Endothelial cell of umbilical vein (primary cell): ENCODE measurements at regions of chr18 and their contacts with region 1.

Region 1: GRCh38 chr18:24488824-24489493 is 28.5 kb downstream of the HRH4 start:
- DNase-seq: peak; percentile 54
- H3K4me3 ChIP-seq: no peak overlapping the region
- H3K27ac ChIP-seq: no peak overlapping the region
- H3K4me1 ChIP-seq: no peaks in the 10 kb centered on the region
- H3K27me3 ChIP-seq: peaks cover 14 to 16% of the 10 kb centered on the region in 2 experiments
- CTCF ChIP-seq: peak; percentile 42 to 56
- POLR2A ChIP-seq: no peak

Region 2: GRCh38 chr18:24176727-24177416 is 312.1 kb before region 1 on chr18:
- CTCF ChIA-PET with region 1: interaction called, 276 read pairs
- POLR2A ChIA-PET with region 1: no interaction called
- dilution Hi-C with region 1: no loop called
- intact Hi-C with region 1: loop called (anchors 1 kb)
- DNase-seq: peak; percentile 43
- H3K4me3 ChIP-seq: no peak overlapping the region
- H3K27ac ChIP-seq: no peak overlapping the region
- H3K4me1 ChIP-seq: no peaks in the 10 kb centered on the region
- H3K27me3 ChIP-seq: no peaks in the 10 kb centered on the region
- CTCF ChIP-seq: peak; percentile 72 to 86
- POLR2A ChIP-seq: no peak

Region 3: GRCh38 chr18:24200494-24201290 is 288.3 kb before region 1 on chr18:
- CTCF ChIA-PET with region 1: no interaction called
- POLR2A ChIA-PET with region 1: no interaction called
- dilution Hi-C with region 1: no loop called
- intact Hi-C with region 1: no loop called
- DNase-seq: no peak
- H3K4me3 ChIP-seq: no peak overlapping the region
- H3K27ac ChIP-seq: no peak overlapping the region
- H3K4me1 ChIP-seq: no peaks in the 10 kb centered on the region
- H3K27me3 ChIP-seq: no peaks in the 10 kb centered on the region
- CTCF ChIP-seq: no peak
- POLR2A ChIP-seq: no peak

Region 4: GRCh38 chr18:24369426-24369825 is 119.5 kb before region 1 on chr18:
- CTCF ChIA-PET with region 1: interaction called, 355 read pairs
- POLR2A ChIA-PET with region 1: no interaction called
- dilution Hi-C with region 1: no loop called
- intact Hi-C with region 1: no loop called
- DNase-seq: no peak
- H3K4me3 ChIP-seq: no peak overlapping the region
- H3K27ac ChIP-seq: peak overlapping the region; percentile 19
- H3K4me1 ChIP-seq: peaks cover 11% of the 10 kb centered on the region
- H3K27me3 ChIP-seq: no peaks in the 10 kb centered on the region
- CTCF ChIP-seq: no peak
- POLR2A ChIP-seq: no peak

Region 5: DNA sequence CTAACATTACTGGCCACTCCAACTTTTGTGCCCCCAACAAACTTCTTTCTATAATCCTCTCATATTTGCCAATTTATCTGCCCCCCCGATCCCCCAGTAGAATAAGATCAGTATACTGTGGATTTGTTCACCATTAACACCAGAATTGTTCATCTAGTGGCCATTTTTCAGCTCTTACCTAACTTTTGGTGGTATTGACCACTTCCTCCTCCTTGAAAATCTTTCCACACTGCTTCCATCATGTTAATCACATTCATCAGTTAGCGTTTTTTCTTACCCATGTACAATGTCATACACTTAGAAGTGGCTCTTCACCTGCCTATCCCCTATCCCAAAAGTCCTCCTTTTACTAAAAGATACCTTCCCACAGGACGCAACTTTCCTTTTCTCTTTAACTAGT is 56.3 kb before region 1 on chr18:
- CTCF ChIA-PET with region 1: interaction called, 10 read pairs
- POLR2A ChIA-PET with region 1: no interaction called
- dilution Hi-C with region 1: no loop called
- intact Hi-C with region 1: no loop called
- DNase-seq: no peak
- H3K4me3 ChIP-seq: no peak overlapping the region
- H3K27ac ChIP-seq: no peak overlapping the region
- H3K4me1 ChIP-seq: peaks cover 3% of the 10 kb centered on the region
- H3K27me3 ChIP-seq: no peaks in the 10 kb centered on the region
- CTCF ChIP-seq: no peak
- POLR2A ChIP-seq: no peak

Region 6: DNA sequence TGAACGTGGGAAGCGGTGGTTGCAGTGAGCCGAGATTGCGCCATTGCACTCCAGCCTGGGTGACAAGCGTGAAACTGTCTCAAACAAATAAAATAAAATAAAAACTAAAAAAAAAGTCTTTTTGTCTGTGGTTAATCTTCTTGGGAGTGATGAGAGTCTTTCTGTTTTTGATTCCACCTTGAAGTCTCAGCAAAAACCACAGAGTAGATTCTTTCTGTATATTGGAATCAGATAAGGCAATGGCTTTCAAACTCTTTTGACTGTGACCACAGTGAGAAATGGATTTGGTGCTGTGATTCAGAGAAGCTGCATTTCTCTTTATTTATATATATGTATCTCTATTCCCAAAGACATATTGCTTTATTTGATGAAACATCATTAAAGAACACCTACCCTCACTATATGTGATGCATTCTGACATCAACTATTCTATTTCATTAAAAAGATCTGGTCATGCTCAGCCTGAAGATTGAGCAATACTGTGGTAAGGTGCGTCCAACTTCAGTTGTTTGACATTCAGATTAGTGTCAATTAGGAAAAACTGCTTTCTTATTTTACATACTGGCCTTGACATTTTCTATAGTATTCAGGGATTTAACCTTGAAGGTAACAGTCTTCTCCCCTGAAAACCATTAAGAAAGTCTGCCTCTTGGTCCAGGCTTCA is 12.9 kb before region 1 on chr18:
- CTCF ChIA-PET with region 1: interaction called, 16 read pairs
- POLR2A ChIA-PET with region 1: no interaction called
- dilution Hi-C with region 1: no loop called
- intact Hi-C with region 1: no loop called
- DNase-seq: no peak
- H3K4me3 ChIP-seq: no peak overlapping the region
- H3K27ac ChIP-seq: no peak overlapping the region
- H3K4me1 ChIP-seq: no peaks in the 10 kb centered on the region
- H3K27me3 ChIP-seq: no peaks in the 10 kb centered on the region
- CTCF ChIP-seq: no peak
- POLR2A ChIP-seq: no peak

Region 7: DNA sequence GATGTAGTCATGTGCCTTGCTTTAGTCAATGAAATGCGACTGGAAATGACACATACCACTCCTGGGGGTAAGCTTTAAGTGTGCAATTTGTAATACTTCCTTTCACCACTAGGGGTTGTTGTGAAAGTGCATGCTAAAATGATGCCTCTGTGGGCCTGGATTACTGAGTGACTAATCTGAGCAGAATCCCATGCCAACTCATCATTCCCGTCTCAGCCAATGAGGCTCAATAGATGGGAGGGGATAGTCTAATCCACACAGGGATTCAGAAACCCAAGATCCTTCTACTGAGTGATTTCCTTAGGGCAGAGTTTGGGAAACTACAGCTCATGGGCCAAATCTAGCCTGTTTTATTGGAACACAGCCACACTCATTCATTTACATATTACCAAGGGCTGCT is 25.5 kb after region 1 on chr18:
- CTCF ChIA-PET with region 1: interaction called, 13 read pairs
- POLR2A ChIA-PET with region 1: no interaction called
- dilution Hi-C with region 1: no loop called
- intact Hi-C with region 1: no loop called
- DNase-seq: peak; percentile 31
- H3K4me3 ChIP-seq: no peak overlapping the region
- H3K27ac ChIP-seq: no peak overlapping the region
- H3K4me1 ChIP-seq: no peaks in the 10 kb centered on the region
- H3K27me3 ChIP-seq: peaks cover 0 to 4% of the 10 kb centered on the region in 2 experiments
- CTCF ChIP-seq: peak; percentile 47 to 49
- POLR2A ChIP-seq: no peak

Region 8: GRCh38 chr18:24726727-24727492 is 238.0 kb after region 1 on chr18:
- CTCF ChIA-PET with region 1: interaction called, 46 read pairs
- POLR2A ChIA-PET with region 1: no interaction called
- dilution Hi-C with region 1: no loop called
- intact Hi-C with region 1: loop called (anchors 1 kb)
- DNase-seq: peak; percentile 77
- H3K4me3 ChIP-seq: peak overlapping the region in 1 of 3 experiments; percentile 10
- H3K27ac ChIP-seq: no peak overlapping the region
- H3K4me1 ChIP-seq: no peaks in the 10 kb centered on the region
- H3K27me3 ChIP-seq: peaks cover 18 to 21% of the 10 kb centered on the region in 2 experiments
- CTCF ChIP-seq: peak; percentile 77 to 87
- POLR2A ChIP-seq: no peak